SK-N-SH (cell line): ENCODE measurements at regions of chr11 and their contacts with region 1.

Region 1: GRCh38 chr11:84384731-84385130 is 1098.6 kb upstream of the CCDC90B start:
- DNase-seq: peak; percentile 25
- H3K4me3 ChIP-seq: no peak overlapping the region; a peak in 1 of 4 replicates
- H3K27ac ChIP-seq: no peak overlapping the region
- H3K4me1 ChIP-seq: peaks cover 0 to 3% of the 10 kb centered on the region in 2 experiments; a peak in 2 of 4 replicates
- H3K27me3 ChIP-seq: no peaks in the 10 kb centered on the region
- CTCF ChIP-seq: peak; percentile 85
- EP300 ChIP-seq: no peak
- RAD21 ChIP-seq: peak; percentile 70

Region 2: DNA sequence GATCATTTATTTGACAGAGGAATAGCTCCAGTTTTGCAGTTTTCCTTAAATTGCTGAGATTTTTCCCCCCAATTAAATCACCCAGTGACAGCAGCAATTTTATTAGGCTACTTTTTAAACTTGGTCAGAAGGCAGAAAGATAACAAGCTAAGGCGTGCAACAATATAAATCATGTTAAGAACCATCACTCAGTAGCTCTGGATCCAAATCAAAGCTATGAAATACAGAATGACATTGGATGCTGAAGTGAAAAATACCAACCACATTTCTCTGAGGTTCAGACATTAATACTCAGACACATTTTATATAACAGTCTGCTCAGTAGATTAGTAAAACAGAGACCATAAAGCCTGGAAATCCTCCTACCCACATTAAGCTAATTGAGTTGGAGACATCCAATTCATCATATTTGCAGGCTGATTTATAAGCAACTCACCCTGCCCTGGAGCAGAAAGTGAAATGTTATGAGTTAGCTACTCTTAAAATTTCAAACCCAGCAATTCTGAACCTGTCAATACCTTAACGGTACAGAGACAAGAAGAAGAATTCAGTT is 134.0 kb after region 1 on chr11:
- CTCF ChIA-PET with region 1: interaction called, 46 read pairs
- POLR2A ChIA-PET with region 1: no interaction called
- DNase-seq: peak; percentile 44
- H3K4me3 ChIP-seq: no peak overlapping the region
- H3K27ac ChIP-seq: peak overlapping the region in 1 of 2 experiments; percentile 82; a peak in 2 of 4 replicates
- H3K4me1 ChIP-seq: peaks cover 0 to 15% of the 10 kb centered on the region in 2 experiments; a peak in 3 of 4 replicates
- H3K27me3 ChIP-seq: no peaks in the 10 kb centered on the region
- CTCF ChIP-seq: no peak
- EP300 ChIP-seq: peak; percentile 20 to 98; a peak in 3 of 4 replicates
- RAD21 ChIP-seq: no peak